AG04450 (cell line): ENCODE measurements at regions of chr2 and their contacts with region 1.

Region 1: DNA sequence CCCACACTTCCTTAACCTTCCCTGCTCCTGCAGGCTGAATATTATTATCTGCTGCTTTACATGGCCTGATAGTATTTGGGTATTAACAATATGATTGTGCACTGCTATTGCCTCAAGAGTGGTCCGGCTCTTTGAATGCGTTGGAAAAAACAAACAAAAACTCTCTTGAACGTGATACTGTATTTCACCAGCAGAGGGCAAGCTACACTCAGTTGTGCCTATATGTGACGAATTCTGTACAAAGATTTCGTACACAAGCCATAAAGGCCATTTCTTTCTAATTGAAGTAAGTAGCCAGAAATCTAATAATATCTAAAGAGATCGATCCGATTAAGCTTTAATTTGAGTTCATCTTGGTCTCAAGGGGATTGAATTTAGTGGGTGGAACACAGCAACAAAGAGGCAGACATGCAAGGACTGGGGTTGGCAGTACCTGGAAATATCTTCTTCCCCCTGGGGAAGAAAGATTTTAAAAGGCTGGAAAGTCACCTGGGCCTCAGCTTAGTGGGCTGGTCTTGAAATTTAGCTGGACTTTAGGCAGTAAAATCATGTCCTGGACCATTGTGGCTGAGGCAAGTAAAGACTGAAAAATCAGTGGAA is 49.3 kb upstream of the RAB6D start:
- DNase-seq: no peak
- H3K4me3 ChIP-seq: no peak overlapping the region
- H3K27ac ChIP-seq: no peak overlapping the region
- H3K27me3 ChIP-seq: no peaks in the 10 kb centered on the region
- CTCF ChIP-seq: peak; percentile 79

Region 2: DNA sequence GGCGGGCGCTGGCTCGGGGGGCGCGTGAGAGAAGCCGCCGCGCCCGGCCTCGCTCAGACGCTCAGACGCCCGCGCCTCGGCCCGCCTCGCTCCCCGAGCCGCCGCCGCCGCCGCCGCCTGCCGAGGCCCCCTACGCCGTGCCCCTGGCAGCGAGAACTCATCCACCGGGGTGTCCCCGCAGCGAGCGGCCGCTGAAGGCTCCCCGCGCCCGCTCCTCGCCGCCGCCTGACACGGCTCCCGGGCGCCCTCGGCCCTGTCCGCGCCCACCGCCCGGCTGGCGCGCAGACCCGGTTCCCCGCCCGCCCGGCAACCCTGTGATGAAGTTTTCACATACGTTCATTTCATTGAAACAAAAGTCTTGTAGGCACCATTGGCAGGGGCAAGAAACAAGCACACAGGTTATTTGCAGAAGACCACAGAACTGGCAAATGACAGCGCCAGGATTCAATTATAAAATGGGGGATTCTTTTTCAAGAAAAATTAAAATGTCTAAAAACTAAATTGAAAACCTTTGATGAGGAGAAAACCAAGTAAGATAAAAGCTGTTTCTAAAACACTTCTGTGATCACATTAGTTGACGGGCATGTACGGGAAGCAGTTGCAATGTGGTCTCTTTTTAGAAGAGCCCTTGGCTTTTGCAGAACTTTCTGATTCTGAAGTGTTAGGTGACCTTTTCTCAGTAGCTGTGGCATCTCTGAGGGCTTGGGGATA is 12.1 kb after region 1 on chr2:
- CTCF ChIA-PET with region 1: interaction called, 13 read pairs
- POLR2A ChIA-PET with region 1: no interaction called
- DNase-seq: no peak
- H3K4me3 ChIP-seq: no peak overlapping the region
- H3K27ac ChIP-seq: no peak overlapping the region
- H3K27me3 ChIP-seq: peaks cover 35% of the 10 kb centered on the region
- CTCF ChIP-seq: no peak

Region 3: DNA sequence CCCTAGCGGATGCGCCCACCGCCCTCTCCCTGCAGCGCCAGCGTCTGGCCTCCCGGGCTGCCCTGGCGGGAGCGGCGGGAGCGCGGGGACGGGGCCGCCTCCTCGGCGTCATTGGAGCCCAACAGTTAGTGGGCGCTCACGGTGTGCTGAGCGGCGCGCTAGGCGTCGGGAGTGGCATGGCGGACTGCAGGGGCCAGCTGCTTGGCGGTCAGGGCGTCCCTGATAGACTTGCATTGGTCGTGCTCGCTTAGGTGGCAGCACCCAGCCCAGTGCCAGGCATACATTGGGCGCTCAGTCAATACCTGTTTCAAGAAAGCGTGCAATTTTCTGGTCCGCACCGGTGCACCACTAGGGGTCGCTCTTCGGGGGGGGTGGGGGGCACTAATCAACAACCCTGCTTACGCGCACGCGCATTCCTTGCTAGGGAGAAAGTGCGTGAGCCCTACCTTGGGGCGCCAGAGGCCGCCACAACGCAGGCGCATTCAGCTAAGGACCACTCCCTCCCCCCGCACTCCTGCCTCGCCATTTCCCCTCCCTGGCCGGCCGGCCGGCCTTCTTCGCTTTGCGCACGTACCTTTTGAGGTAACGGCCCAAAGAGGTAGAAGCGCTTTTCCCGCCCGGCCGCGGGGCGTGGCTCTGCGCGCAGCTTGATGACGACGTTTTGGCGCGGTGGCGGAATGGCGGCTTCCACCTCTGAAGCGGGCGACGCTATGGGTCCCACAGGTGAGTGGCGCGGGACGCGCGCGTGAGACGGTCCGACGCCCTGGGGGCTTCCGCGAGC is 79.4 kb after region 1 on chr2:
- CTCF ChIA-PET with region 1: interaction called, 34 read pairs
- POLR2A ChIA-PET with region 1: no interaction called
- DNase-seq: peak; percentile 68
- H3K4me3 ChIP-seq: peak overlapping the region; percentile 78
- H3K27ac ChIP-seq: peak overlapping the region; percentile 65
- H3K27me3 ChIP-seq: no peaks in the 10 kb centered on the region
- CTCF ChIP-seq: peak; percentile 81

Region 4: GRCh38 chr2:131673392-131674173 is 260.3 kb after region 1 on chr2:
- CTCF ChIA-PET with region 1: interaction called, 57 read pairs
- POLR2A ChIA-PET with region 1: no interaction called
- DNase-seq: no peak
- H3K4me3 ChIP-seq: peak overlapping the region; percentile 50
- H3K27ac ChIP-seq: no peak overlapping the region
- H3K27me3 ChIP-seq: no peaks in the 10 kb centered on the region
- CTCF ChIP-seq: peak; percentile 79